Panc1 (cell line): ENCODE measurements at regions of chr20 and their contacts with region 1.

Region 1: GRCh38 chr20:21048841-21049273 is 57.3 kb downstream of the LINC00237 start:
- DNase-seq: no peak
- ATAC-seq: peak; percentile 69
- H3K4me3 ChIP-seq: no peak overlapping the region
- H3K27ac ChIP-seq: no peak overlapping the region
- H3K4me1 ChIP-seq: no peaks in the 10 kb centered on the region
- H3K27me3 ChIP-seq: no peaks in the 10 kb centered on the region
- CTCF ChIP-seq: peak; percentile 87

Region 2: GRCh38 chr20:20820104-20820503 is 228.8 kb before region 1 on chr20:
- CTCF ChIA-PET with region 1: no interaction called
- POLR2A ChIA-PET with region 1: no interaction called
- in situ Hi-C with region 1: no loop called
- intact Hi-C with region 1: no loop called
- DNase-seq: no peak
- ATAC-seq: no peak
- H3K4me3 ChIP-seq: no peak overlapping the region
- H3K27ac ChIP-seq: no peak overlapping the region
- H3K4me1 ChIP-seq: no peaks in the 10 kb centered on the region
- H3K27me3 ChIP-seq: no peaks in the 10 kb centered on the region; the same call in 1 of the 2 replicates
- CTCF ChIP-seq: peak; percentile 42

Region 3: DNA sequence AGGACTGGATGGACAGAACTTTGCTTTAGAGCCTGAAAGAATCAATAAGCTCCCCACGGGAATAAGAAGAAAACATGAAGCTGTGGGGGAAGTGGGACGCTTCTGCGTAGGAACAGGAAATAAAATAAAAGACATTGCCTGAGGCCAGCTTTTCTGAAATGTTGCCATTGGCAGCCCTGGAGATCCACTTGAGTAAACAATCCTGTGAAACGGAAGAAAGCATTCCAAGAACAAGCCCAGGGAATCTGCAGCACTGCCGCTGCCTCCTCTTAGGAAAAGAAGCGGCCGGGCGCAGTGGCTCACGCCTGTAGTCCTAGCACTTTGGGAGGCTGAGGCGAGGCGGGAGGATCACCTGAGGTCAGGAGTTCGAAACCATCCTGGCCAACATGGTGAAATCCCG is 154.1 kb before region 1 on chr20:
- CTCF ChIA-PET with region 1: no interaction called
- POLR2A ChIA-PET with region 1: no interaction called
- in situ Hi-C with region 1: no loop called
- intact Hi-C with region 1: no loop called
- DNase-seq: no peak
- ATAC-seq: no peak
- H3K4me3 ChIP-seq: no peak overlapping the region
- H3K27ac ChIP-seq: no peak overlapping the region
- H3K4me1 ChIP-seq: peaks cover 5% of the 10 kb centered on the region
- H3K27me3 ChIP-seq: no peaks in the 10 kb centered on the region
- CTCF ChIP-seq: no peak

Region 4: GRCh38 chr20:21027569-21027968 is 21.3 kb before region 1 on chr20:
- CTCF ChIA-PET with region 1: interaction called, 10 read pairs
- POLR2A ChIA-PET with region 1: no interaction called
- in situ Hi-C with region 1: no loop called
- intact Hi-C with region 1: no loop called
- DNase-seq: no peak
- ATAC-seq: peak; percentile 87
- H3K4me3 ChIP-seq: no peak overlapping the region
- H3K27ac ChIP-seq: no peak overlapping the region
- H3K4me1 ChIP-seq: no peaks in the 10 kb centered on the region
- H3K27me3 ChIP-seq: no peaks in the 10 kb centered on the region
- CTCF ChIP-seq: peak; percentile 44